ENCODE measurements at regions of chr19 and their contacts with region 1.

Region 1: GRCh38 chr19:39328046-39328705 is 7.5 kb upstream of the LRFN1 start:
- DNase-seq: peak; percentile 83 to 97
- ATAC-seq: peak; percentile 74 to 83
- H3K4me3 ChIP-seq: no peak overlapping the region
- H3K27ac ChIP-seq: peak overlapping the region in 1 of 2 experiments; percentile 19; a peak in 2 of 6 replicates
- H3K4me1 ChIP-seq: peaks cover 10% of the 10 kb centered on the region; the same call in 1 of the 3 replicates
- CTCF ChIP-seq: peak; percentile 100
- EP300 ChIP-seq: no peak
- POLR2A ChIP-seq: no peak
- RAD21 ChIP-seq: peak; percentile 100

Region 2: GRCh38 chr19:39038098-39038497 is 290.1 kb before region 1 on chr19:
- CTCF ChIA-PET with region 1: interaction called, 12 read pairs
- POLR2A ChIA-PET with region 1: no interaction called
- DNase-seq: peak; percentile 82 to 99
- ATAC-seq: peak; percentile 98 to 99
- H3K4me3 ChIP-seq: no peak overlapping the region
- H3K27ac ChIP-seq: peak overlapping the region in 1 of 2 experiments; percentile 38; a peak in 1 of 6 replicates
- H3K4me1 ChIP-seq: peaks cover 8% of the 10 kb centered on the region
- CTCF ChIP-seq: peak; percentile 48; the same call in 2 of the 3 replicates
- EP300 ChIP-seq: no peak
- POLR2A ChIP-seq: no peak
- RAD21 ChIP-seq: peak; percentile 71 to 77

Region 3: GRCh38 chr19:39125554-39126311 is 202.4 kb before region 1 on chr19 and contains the start of gene PAK4:
- CTCF ChIA-PET with region 1: interaction called, 133 read pairs
- POLR2A ChIA-PET with region 1: interaction called, 5 read pairs
- DNase-seq: peak; percentile 99 to 100
- ATAC-seq: peak; percentile 81 to 89
- H3K4me3 ChIP-seq: peak within 1 kb of the TSS; percentile 84
- H3K27ac ChIP-seq: peak within 1 kb of the TSS; percentile 92 to 94
- H3K4me1 ChIP-seq: peaks cover 61% of the 10 kb centered on the region
- CTCF ChIP-seq: no peak
- EP300 ChIP-seq: no peak
- POLR2A ChIP-seq: peak; percentile 95
- RAD21 ChIP-seq: peak in 1 of 2 experiments; percentile 23; a peak in 1 of 5 replicates
- polyA plus RNA-seq, gene PAK4: 37.9 and 42.9 TPM in 2 replicates

Region 4: DNA sequence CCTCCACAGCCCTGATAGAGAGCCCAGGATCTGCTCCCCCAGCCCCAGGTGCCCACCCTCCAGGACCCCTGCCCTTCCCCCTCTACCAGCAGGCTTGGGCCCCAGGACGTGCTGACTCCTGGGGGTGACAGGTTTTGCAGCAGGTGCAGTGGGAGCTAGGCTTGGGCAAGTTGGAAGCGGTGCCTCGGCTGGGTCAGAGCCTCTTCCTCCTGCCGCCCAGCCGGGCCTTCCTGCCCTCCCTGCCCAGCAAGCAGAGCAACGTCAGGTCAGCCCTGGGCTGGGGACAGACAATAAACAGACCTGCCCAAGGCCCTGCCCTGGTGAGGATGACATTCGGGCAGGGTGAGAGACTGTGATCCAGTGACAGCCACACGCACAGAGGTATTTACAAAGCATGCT is 140.6 kb before region 1 on chr19:
- CTCF ChIA-PET with region 1: interaction called, 11 read pairs
- POLR2A ChIA-PET with region 1: no interaction called
- DNase-seq: no peak
- ATAC-seq: peak; percentile 35 to 45
- H3K4me3 ChIP-seq: no peak overlapping the region
- H3K27ac ChIP-seq: peak overlapping the region in 1 of 2 experiments; percentile 31; a peak in 3 of 6 replicates
- H3K4me1 ChIP-seq: peaks cover 11% of the 10 kb centered on the region; the same call in 2 of the 3 replicates
- CTCF ChIP-seq: peak; percentile 21; the same call in 2 of the 3 replicates
- EP300 ChIP-seq: no peak
- POLR2A ChIP-seq: peak; percentile 9; the same call in 1 of the 2 replicates
- RAD21 ChIP-seq: no peak; a peak in 1 of 5 replicates

Region 5: GRCh38 chr19:39308531-39309304 is 19.5 kb before region 1 on chr19:
- CTCF ChIA-PET with region 1: interaction called, 86 read pairs
- POLR2A ChIA-PET with region 1: no interaction called
- DNase-seq: peak in 1 of 2 experiments; percentile 71
- ATAC-seq: peak in 1 of 2 experiments; percentile 42; a peak in 3 of 6 replicates
- H3K4me3 ChIP-seq: no peak overlapping the region
- H3K27ac ChIP-seq: no peak overlapping the region
- H3K4me1 ChIP-seq: peaks cover 4% of the 10 kb centered on the region; the same call in 2 of the 3 replicates
- CTCF ChIP-seq: no peak
- EP300 ChIP-seq: no peak
- POLR2A ChIP-seq: no peak
- RAD21 ChIP-seq: no peak

Measured in A549 (cell line).